CD4-positive, alpha-beta memory T cell (primary cell): ENCODE measurements at regions of chr19 and their contacts with region 1.

Region 1: DNA sequence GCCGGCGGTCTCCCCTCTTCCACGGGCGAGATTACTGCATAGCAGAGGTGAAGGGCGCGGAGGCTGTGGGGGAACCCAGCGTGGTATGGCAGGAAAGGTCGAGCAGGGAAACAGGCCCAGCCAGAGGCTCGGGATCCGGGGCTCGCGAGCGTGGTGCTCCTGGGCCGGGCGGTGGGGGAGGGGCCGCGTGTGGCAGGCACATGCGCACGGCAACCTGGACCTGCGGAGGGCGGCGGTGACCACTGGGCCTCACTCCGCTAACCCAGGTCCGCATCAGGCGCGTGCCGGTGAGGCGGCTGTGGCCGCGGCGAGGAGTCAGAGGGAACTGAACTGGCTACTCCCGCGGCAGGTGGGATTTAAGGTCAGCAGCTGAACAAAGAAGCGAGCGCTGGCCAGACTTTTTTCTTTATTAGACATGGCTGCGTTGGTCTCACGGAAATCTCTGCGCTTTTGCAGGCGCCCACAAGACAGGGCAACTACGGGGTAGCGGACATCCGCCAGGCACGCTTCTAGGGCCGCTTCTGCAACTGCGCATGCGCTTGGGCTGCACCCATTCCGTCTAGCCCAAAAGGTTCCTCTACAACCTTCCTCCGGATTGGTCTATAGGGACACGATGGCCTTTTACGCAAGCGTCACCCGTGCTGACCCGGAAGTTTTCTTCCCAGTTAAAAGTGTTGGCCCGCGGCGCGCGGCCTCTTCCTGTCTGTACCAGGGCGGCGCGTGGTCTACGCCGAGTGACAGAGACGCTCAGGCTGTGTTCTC is at the start of gene RPS5:
- DNase-seq: peak; percentile 94 to 99 (median 98)
- H3K4me3 ChIP-seq: peak within 1 kb of the TSS; percentile 56 to 65
- H3K4me3 Mint-ChIP-seq: peak within 1 kb of the TSS; percentile 93 to 99 (median 96)
- H3K27ac ChIP-seq: peak within 1 kb of the TSS; percentile 89
- H3K27ac Mint-ChIP-seq: peak within 1 kb of the TSS; percentile 96 to 99 (median 98)
- H3K4me1 ChIP-seq: peaks cover 41% of the 10 kb centered on the region
- H3K4me1 Mint-ChIP-seq: peaks cover 27 to 60% (median 39%) of the 10 kb centered on the region in 4 donors
- H3K27me3 ChIP-seq: no peaks in the 10 kb centered on the region
- H3K27me3 Mint-ChIP-seq: no peaks in the 10 kb centered on the region
- total RNA-seq, gene RPS5: 1,267 to 1,360 TPM

Region 2: GRCh38 chr19:58400916-58401839 is 14.4 kb after region 1 on chr19:
- CTCF ChIA-PET with region 1: no interaction called
- POLR2A ChIA-PET with region 1: interaction called, 7 read pairs
- intact Hi-C with region 1: loop called (anchors 1 kb)
- DNase-seq: peak; percentile 98 to 100 (median 99)
- H3K4me3 ChIP-seq: peak overlapping the region; percentile 57 to 59
- H3K4me3 Mint-ChIP-seq: peak overlapping the region; percentile 87 to 97 (median 91)
- H3K27ac ChIP-seq: peak overlapping the region; percentile 74
- H3K27ac Mint-ChIP-seq: peak overlapping the region; percentile 89 to 99 (median 97)
- H3K4me1 ChIP-seq: peaks cover 20% of the 10 kb centered on the region
- H3K4me1 Mint-ChIP-seq: peaks cover 5 to 20% (median 10%) of the 10 kb centered on the region in 4 donors
- H3K27me3 ChIP-seq: peaks cover 8% of the 10 kb centered on the region
- H3K27me3 Mint-ChIP-seq: peaks cover 6 to 9% of the 10 kb centered on the region in 2 donors

Region 3: GRCh38 chr19:58408152-58409009 is 21.6 kb after region 1 on chr19 and contains the start of gene ZNF584:
- CTCF ChIA-PET with region 1: no interaction called
- POLR2A ChIA-PET with region 1: interaction called, 7 read pairs
- intact Hi-C with region 1: loop called (anchors 1 kb)
- DNase-seq: peak; percentile 93 to 94 (median 93)
- H3K4me3 ChIP-seq: peak within 1 kb of the TSS; percentile 71 to 94
- H3K4me3 Mint-ChIP-seq: peak within 1 kb of the TSS; percentile 92 to 100 (median 96)
- H3K27ac ChIP-seq: peak within 1 kb of the TSS; percentile 77
- H3K27ac Mint-ChIP-seq: peak within 1 kb of the TSS; percentile 91 to 98 (median 95)
- H3K4me1 ChIP-seq: peaks cover 25% of the 10 kb centered on the region
- H3K4me1 Mint-ChIP-seq: peaks cover 21 to 39% (median 33%) of the 10 kb centered on the region in 4 donors
- H3K27me3 ChIP-seq: no peaks in the 10 kb centered on the region
- H3K27me3 Mint-ChIP-seq: no peaks in the 10 kb centered on the region
- total RNA-seq, gene ZNF584: 10.3 to 10.7 TPM